Calu3 (cell line): ENCODE measurements at regions of chr20 and their contacts with region 1.

Region 1: DNA sequence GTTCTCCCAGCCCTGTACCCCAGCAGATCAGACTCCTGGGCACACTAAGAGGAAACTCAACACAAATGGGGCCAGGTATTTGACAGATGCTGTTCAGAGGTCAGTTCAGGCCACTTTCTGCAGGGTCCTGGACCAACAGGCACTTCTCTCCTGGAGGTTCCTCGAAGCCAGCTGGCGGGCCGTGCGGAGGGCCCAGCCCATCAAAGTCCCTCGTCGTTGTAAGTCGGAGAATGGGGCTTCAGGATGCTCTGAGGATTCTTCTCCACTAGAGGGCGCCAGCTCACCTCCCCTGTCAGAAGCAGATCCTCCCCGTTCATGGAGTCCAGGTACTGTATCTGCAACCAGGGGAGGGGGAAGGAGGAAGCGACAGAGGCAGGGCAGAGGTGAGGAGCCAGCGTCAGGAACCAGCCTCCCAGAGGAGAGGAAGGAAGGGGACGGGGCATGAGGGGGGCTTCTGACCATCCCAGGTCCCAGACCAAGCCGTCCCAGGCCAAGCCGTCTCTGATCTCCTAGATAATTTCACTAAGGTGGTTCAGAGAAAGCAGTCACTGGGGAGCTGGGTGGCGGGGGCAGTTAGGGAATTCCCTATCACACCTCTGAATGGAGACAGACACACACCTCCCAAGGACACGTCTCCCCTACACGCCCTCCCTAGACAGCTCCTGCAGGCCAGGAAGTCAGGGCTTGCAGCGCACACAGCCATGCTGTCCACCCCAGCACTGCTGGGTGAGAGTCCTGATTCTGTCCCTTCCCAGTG is 11.7 kb upstream of the FAM83C start:
- DNase-seq: peak; percentile 95
- H3K4me3 Mint-ChIP-seq: peak overlapping the region; percentile 2
- H3K27ac Mint-ChIP-seq: peak overlapping the region; percentile 88
- H3K4me1 Mint-ChIP-seq: peaks cover 84% of the 10 kb centered on the region
- H3K27me3 Mint-ChIP-seq: no peaks in the 10 kb centered on the region
- CTCF ChIP-seq: peak; percentile 97

Region 2: GRCh38 chr20:34268851-34269636 is 1034.9 kb before region 1 on chr20:
- CTCF ChIA-PET with region 1: no interaction called
- intact Hi-C with region 1: no loop called
- DNase-seq: no peak
- H3K4me3 Mint-ChIP-seq: no peak overlapping the region
- H3K27ac Mint-ChIP-seq: no peak overlapping the region
- H3K4me1 Mint-ChIP-seq: no peaks in the 10 kb centered on the region
- H3K27me3 Mint-ChIP-seq: no peaks in the 10 kb centered on the region
- CTCF ChIP-seq: no peak

Region 3: DNA sequence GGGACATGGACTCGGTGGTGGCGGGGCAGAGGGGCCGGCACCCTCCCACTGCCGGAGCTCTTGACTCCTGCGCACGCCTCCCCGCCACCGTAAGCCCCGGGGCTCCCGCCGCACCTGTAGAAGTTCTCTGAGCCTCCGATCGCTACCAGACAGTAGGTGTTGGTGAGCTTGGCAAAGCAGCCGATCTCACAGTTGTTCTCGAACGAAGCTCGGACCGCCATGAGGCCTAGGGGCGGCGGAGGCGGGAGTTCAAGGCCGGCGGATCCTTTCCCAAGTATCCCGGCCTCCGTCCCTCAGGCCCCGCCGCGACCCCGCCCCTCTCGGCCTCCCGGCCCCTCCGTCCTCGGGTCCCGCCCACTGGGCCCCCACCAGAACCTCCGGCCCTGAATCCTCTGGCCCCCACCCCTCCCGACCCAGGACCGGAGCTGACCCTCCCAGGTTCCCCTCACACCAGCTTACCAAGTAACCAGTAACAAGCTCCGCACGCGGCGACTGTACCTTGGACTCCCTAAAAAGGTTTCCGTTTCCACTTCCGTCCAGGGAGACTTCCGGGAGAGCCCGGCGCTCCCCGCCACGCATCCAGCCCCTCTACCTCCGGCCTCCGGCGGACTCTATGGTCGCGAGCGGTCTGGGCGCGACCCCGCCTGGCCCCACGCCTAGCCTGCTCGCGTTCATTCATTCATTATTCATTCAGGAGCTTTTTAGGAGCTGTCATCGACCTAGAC is 19.5 kb before region 1 on chr20 and contains the start of gene EIF6:
- CTCF ChIA-PET with region 1: interaction called, 25 read pairs
- intact Hi-C with region 1: loop called (anchors 1 kb)
- DNase-seq: peak; percentile 95
- H3K4me3 Mint-ChIP-seq: peak within 1 kb of the TSS; percentile 83
- H3K27ac Mint-ChIP-seq: peak within 1 kb of the TSS; percentile 77
- H3K4me1 Mint-ChIP-seq: peaks cover 29% of the 10 kb centered on the region
- H3K27me3 Mint-ChIP-seq: no peaks in the 10 kb centered on the region
- CTCF ChIP-seq: no peak
- total RNA-seq, gene EIF6: 271 and 317 TPM in 2 replicates

Region 4: GRCh38 chr20:35318502-35319157 is 14.7 kb after region 1 on chr20:
- CTCF ChIA-PET with region 1: interaction called, 23 read pairs
- intact Hi-C with region 1: no loop called
- DNase-seq: peak; percentile 81
- H3K4me3 Mint-ChIP-seq: peak overlapping the region; percentile 17
- H3K27ac Mint-ChIP-seq: peak overlapping the region; percentile 97
- H3K4me1 Mint-ChIP-seq: peaks cover 56% of the 10 kb centered on the region
- H3K27me3 Mint-ChIP-seq: no peaks in the 10 kb centered on the region
- CTCF ChIP-seq: no peak

Region 5: GRCh38 chr20:35329435-35330139 is 25.7 kb after region 1 on chr20:
- CTCF ChIA-PET with region 1: interaction called, 85 read pairs
- intact Hi-C with region 1: loop called (anchors 1 kb)
- DNase-seq: peak; percentile 84
- H3K4me3 Mint-ChIP-seq: no peak overlapping the region
- H3K27ac Mint-ChIP-seq: peak overlapping the region; percentile 34
- H3K4me1 Mint-ChIP-seq: peaks cover 54% of the 10 kb centered on the region
- H3K27me3 Mint-ChIP-seq: no peaks in the 10 kb centered on the region
- CTCF ChIP-seq: peak; percentile 87

Region 6: DNA sequence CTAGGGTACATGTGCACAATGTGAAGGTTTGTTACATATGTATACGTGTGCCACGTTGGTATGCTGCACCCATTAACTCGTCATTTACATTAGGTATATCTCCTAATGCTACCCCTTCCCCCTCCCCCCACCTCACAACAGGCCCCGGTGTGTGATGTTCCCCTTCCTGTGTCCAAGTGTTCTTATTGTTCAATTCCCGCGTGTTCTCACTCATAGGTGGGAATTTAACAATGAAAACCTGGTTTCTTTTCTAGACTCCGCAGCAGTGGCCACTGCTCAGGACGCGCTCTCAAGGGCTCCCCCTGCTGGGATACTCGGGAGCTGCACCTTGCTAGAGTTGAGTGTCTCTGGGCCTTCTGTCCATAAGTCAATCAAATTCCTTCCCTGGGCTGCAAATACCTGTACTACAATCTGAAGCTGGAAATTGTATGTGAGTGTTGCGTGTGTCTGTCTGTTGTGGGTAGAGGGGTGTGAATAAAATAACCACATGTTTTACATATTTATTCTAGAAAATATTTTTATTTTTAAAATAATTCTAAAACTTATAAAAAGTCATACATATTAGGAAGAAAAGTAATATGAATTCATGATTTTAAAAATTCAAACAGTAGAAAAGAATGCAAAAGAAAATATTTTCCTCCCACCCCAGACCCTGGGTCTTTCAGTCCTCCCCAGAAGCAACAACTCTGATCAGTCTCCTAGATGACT is 143.3 kb after region 1 on chr20:
- CTCF ChIA-PET with region 1: interaction called, 10 read pairs
- intact Hi-C with region 1: loop called (anchors 1 kb)
- DNase-seq: peak; percentile 99
- H3K4me3 Mint-ChIP-seq: peak overlapping the region; percentile 65
- H3K27ac Mint-ChIP-seq: peak overlapping the region; percentile 41
- H3K4me1 Mint-ChIP-seq: peaks cover 9% of the 10 kb centered on the region
- H3K27me3 Mint-ChIP-seq: no peaks in the 10 kb centered on the region
- CTCF ChIP-seq: peak; percentile 99